CD4-positive, alpha-beta memory T cell (primary cell): ENCODE measurements at regions of chr11 and their contacts with region 1.

Region 1: DNA sequence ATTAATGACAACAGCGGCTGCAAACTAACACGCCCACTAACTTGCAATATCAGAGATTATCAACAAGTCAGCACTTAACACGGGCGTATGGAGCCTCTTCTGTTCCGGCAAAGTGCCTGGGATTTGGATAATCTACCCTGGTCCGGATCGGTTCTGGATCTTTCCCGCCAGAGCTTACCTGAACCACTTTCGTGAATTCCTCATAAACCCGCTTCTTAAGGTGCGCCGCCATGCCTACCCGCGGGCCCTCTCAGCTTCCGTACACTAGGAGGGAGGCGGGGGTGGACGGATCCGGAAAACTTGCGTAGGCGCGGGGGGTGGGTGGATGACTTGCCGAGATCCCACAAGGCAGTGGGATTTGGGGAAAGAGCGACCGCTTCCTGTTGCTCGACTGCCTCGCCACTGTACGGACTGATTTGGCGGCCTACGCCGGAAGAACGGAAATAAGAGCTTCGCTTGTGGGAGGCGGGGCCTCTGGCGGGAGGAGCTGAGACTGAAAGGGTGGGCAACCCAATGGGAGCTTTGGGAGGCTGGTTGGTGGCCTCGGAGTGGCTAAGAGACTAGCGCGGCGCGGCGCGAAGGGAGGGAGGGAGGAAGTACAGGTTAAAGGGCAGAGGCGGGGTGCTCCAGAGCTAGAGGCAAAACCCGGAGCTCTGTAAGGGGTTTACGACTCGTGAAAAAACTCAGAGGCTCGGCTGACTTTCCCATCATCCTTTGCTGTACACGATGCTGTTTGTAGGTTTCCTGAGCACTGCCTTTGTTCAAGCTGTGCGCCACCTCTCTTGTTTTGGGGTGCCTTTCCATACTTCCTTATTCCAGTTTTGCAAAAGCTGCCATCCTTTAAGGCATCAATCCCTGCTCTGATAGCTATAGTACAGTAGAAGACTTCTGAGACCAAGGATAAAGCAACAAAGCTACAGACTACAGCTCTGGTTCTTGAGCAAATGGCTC is at the start of gene INTS4:
- DNase-seq: peak; percentile 97 to 99 (median 99)
- H3K4me3 ChIP-seq: peak within 1 kb of the TSS; percentile 69 to 99
- H3K4me3 Mint-ChIP-seq: peak within 1 kb of the TSS; percentile 92 to 98 (median 96)
- H3K27ac ChIP-seq: peak within 1 kb of the TSS; percentile 76
- H3K27ac Mint-ChIP-seq: peak within 1 kb of the TSS; percentile 96 to 99 (median 98)
- H3K4me1 ChIP-seq: peaks cover 25% of the 10 kb centered on the region
- H3K4me1 Mint-ChIP-seq: peaks cover 15 to 41% (median 26%) of the 10 kb centered on the region in 4 donors
- H3K27me3 ChIP-seq: no peaks in the 10 kb centered on the region
- H3K27me3 Mint-ChIP-seq: no peaks in the 10 kb centered on the region
- total RNA-seq, gene INTS4: 84.0 to 85.0 TPM

Region 2: DNA sequence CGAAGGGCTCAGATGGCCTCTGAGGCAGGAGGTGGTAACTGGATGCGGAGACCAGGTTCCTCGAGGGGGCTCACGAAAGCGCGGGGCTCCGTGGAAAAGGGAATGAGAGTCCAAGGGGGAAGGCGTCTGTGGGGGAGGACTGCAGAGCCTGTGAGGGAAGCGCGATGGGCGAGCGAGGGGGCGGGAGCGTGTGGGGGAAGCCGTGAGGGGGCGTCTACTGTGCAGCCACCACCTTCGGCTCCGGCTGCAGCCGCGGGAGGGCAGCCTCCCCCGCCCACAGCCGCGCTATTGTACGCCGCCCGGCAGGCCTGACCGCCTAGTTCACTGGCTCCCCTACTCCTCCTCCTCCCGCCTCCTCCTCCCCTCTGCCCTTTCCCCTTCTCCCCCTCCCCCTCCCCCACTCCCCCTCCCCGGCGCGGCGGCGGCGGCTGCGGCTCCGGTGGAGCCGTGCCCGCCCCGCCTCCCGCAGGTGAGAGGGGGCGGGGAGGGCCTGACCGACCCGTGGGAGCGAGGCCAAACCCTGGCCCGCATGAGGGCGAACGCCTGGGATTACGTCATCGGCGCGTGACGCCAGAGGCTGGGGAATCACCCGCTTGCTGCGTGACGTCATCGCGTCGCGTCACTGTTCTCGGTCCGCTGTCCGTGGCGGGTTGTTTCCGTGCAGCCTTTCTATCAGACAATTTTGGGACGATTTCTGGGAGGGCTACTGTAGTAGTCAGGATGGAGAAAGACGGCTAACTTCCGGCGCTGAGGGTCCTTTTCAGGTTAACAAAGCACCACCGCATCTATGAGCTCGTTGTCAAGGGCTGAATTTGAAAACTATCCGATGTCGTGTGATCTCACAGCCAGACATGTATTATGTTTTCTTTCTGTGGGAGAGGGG is 520.6 kb before region 1 on chr11 and contains the start of gene PAK1:
- CTCF ChIA-PET with region 1: no interaction called
- POLR2A ChIA-PET with region 1: no interaction called
- intact Hi-C with region 1: loop called (anchors 10 kb)
- DNase-seq: peak; percentile 87 to 96 (median 89)
- H3K4me3 ChIP-seq: peak within 1 kb of the TSS; percentile 42 to 49
- H3K4me3 Mint-ChIP-seq: peak within 1 kb of the TSS; percentile 87 to 97 (median 92)
- H3K27ac ChIP-seq: peak within 1 kb of the TSS; percentile 49
- H3K27ac Mint-ChIP-seq: peak within 1 kb of the TSS; percentile 96 to 100 (median 99)
- H3K4me1 ChIP-seq: peaks cover 11% of the 10 kb centered on the region
- H3K4me1 Mint-ChIP-seq: peaks cover 7 to 14% (median 12%) of the 10 kb centered on the region in 4 donors
- H3K27me3 ChIP-seq: no peaks in the 10 kb centered on the region
- H3K27me3 Mint-ChIP-seq: peaks cover 3 to 11% of the 10 kb centered on the region in 2 donors
- total RNA-seq, gene PAK1: 9.8 to 10.4 TPM

Region 3: GRCh38 chr11:77820563-77821348 is 173.9 kb before region 1 on chr11 and contains the starts of genes AAMDC and RSF1:
- CTCF ChIA-PET with region 1: interaction called, 6 read pairs
- POLR2A ChIA-PET with region 1: interaction called, 62 read pairs
- intact Hi-C with region 1: loop called (anchors 1 kb)
- DNase-seq: peak; percentile 95 to 99 (median 98)
- H3K4me3 ChIP-seq: peak within 1 kb of the TSS; percentile 96 to 100
- H3K4me3 Mint-ChIP-seq: peak within 1 kb of the TSS; percentile 98 to 100 (median 99)
- H3K27ac ChIP-seq: peak within 1 kb of the TSS; percentile 88
- H3K27ac Mint-ChIP-seq: peak within 1 kb of the TSS; percentile 92 to 98 (median 96)
- H3K4me1 ChIP-seq: peaks cover 45% of the 10 kb centered on the region
- H3K4me1 Mint-ChIP-seq: peaks cover 30 to 52% (median 39%) of the 10 kb centered on the region in 4 donors
- H3K27me3 ChIP-seq: no peaks in the 10 kb centered on the region
- H3K27me3 Mint-ChIP-seq: no peaks in the 10 kb centered on the region
- total RNA-seq, gene AAMDC: 7.6 to 9.4 TPM
- total RNA-seq, gene RSF1: 105 to 106 TPM

Region 4: GRCh38 chr11:78079232-78080083 is 84.8 kb after region 1 on chr11 and contains the start of gene NDUFC2:
- CTCF ChIA-PET with region 1: interaction called, 3 read pairs
- POLR2A ChIA-PET with region 1: interaction called, 18 read pairs
- intact Hi-C with region 1: loop called (anchors 1 kb)
- DNase-seq: peak; percentile 60 to 66 (median 64)
- H3K4me3 ChIP-seq: peak within 1 kb of the TSS; percentile 77 to 98
- H3K4me3 Mint-ChIP-seq: peak within 1 kb of the TSS; percentile 93 to 98 (median 96)
- H3K27ac ChIP-seq: peak within 1 kb of the TSS; percentile 75
- H3K27ac Mint-ChIP-seq: peak within 1 kb of the TSS; percentile 87 to 98 (median 96)
- H3K4me1 ChIP-seq: peaks cover 55% of the 10 kb centered on the region
- H3K4me1 Mint-ChIP-seq: peaks cover 34 to 72% (median 49%) of the 10 kb centered on the region in 4 donors
- H3K27me3 ChIP-seq: no peaks in the 10 kb centered on the region
- H3K27me3 Mint-ChIP-seq: no peaks in the 10 kb centered on the region
- total RNA-seq, gene NDUFC2: 80.5 to 86.5 TPM

Region 5: DNA sequence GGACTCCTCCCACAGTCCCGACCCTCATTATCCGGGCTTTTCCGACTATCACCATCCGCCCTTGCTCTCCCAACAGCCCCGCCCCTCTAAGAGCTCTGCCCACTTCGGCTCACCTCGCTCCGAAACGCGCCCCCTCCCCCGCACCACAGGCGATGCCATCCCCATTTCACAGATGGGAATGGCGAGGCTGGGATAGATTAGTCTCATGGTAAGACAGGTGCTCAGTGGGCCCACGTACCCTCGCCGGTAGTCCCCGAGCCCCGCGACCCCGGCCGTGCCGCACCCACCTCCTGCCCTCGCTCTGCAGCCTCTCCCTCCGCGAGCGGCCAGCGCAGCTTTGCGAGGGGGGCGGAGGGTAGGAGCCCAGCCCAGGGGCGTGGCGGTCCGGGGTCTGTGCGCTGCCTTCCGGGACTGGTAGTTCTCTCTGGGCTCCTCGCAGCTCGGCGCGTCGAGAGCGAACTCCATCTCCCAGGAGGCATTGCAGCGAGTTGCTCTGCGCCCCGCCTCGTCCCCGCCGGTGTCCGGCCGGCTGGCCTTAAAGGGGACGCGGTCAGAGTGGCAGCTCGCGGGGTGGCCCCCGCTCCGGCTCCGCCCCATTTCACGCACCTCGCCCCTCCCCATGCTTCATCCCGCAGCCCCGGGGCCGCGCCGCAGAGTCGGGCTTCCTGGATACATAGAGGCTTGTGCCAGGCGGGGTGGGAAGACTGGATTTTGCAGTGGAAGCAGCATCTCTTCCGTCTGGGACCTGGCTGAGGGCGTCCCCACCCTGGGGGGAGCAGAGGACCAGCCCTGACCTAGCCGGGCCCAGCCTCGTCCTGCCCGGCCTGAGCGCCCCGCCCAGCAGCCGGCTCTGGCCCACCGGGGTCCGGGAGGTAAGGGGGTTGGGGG is 193.8 kb after region 1 on chr11 and contains the starts of genes KCTD21 and USP35:
- CTCF ChIA-PET with region 1: no interaction called
- POLR2A ChIA-PET with region 1: interaction called, 14 read pairs
- intact Hi-C with region 1: loop called (anchors 1 kb)
- DNase-seq: peak; percentile 85 to 92 (median 87)
- H3K4me3 ChIP-seq: peak within 1 kb of the TSS; percentile 88 to 90
- H3K4me3 Mint-ChIP-seq: peak within 1 kb of the TSS; percentile 98 to 99 (median 99)
- H3K27ac ChIP-seq: peak within 1 kb of the TSS; percentile 85
- H3K27ac Mint-ChIP-seq: peak within 1 kb of the TSS; percentile 95 to 99 (median 98)
- H3K4me1 ChIP-seq: peaks cover 39% of the 10 kb centered on the region
- H3K4me1 Mint-ChIP-seq: peaks cover 33 to 63% (median 47%) of the 10 kb centered on the region in 4 donors
- H3K27me3 ChIP-seq: no peaks in the 10 kb centered on the region
- H3K27me3 Mint-ChIP-seq: no peaks in the 10 kb centered on the region
- total RNA-seq, gene KCTD21: 8.0 to 8.6 TPM
- total RNA-seq, gene USP35: 12.4 to 14.3 TPM

Region 6: DNA sequence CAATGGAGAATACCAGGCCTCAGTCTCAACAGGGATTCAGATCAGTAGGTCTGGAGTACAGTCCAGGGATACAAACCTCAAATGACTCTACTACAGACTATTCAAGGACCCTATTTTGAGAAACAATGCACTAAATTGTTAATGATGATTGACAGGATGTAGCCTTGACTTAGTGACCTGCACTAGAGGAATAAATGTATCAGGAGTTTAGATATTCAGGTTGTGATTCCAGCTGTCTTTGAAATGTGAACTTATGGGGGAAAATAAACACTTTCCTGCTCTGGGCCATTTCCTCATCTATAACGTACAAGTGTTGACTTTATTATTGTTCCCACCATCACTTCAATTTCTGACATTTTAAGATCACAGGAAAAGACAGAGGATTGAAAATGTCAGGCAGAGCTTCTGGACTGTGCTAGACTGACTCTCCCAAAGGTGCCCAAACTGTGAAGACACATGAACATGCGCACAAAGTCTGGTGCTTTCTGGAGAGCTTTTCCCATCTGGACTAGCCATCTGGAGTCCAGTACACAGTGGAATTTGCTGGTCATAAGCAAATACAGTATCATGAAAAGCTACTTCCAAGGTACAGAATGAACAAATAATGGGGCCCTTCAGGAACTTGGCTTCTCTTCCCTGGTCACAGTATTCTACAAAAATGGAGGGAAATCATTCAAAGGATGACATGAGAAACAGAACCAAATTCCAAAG is 304.5 kb after region 1 on chr11:
- CTCF ChIA-PET with region 1: no interaction called
- POLR2A ChIA-PET with region 1: no interaction called
- intact Hi-C with region 1: no loop called
- DNase-seq: no peak
- H3K4me3 ChIP-seq: no peak overlapping the region
- H3K4me3 Mint-ChIP-seq: no peak overlapping the region
- H3K27ac ChIP-seq: no peak overlapping the region
- H3K27ac Mint-ChIP-seq: no peak overlapping the region
- H3K4me1 ChIP-seq: no peaks in the 10 kb centered on the region
- H3K4me1 Mint-ChIP-seq: peaks cover 0 to 3% (median 0%) of the 10 kb centered on the region in 4 donors
- H3K27me3 ChIP-seq: no peaks in the 10 kb centered on the region
- H3K27me3 Mint-ChIP-seq: peaks cover 0 to 2% of the 10 kb centered on the region in 2 donors

Region 7: GRCh38 chr11:78574386-78575381 is 580.0 kb after region 1 on chr11 and contains the start of gene NARS2:
- CTCF ChIA-PET with region 1: no interaction called
- POLR2A ChIA-PET with region 1: interaction called, 17 read pairs
- intact Hi-C with region 1: loop called (anchors 2 kb)
- DNase-seq: peak; percentile 94 to 98 (median 96)
- H3K4me3 ChIP-seq: peak within 1 kb of the TSS; percentile 46 to 47
- H3K4me3 Mint-ChIP-seq: peak within 1 kb of the TSS; percentile 92 to 99 (median 97)
- H3K27ac ChIP-seq: peak within 1 kb of the TSS; percentile 86
- H3K27ac Mint-ChIP-seq: peak within 1 kb of the TSS; percentile 91 to 100 (median 98)
- H3K4me1 ChIP-seq: peaks cover 28% of the 10 kb centered on the region
- H3K4me1 Mint-ChIP-seq: peaks cover 20 to 41% (median 29%) of the 10 kb centered on the region in 4 donors
- H3K27me3 ChIP-seq: no peaks in the 10 kb centered on the region
- H3K27me3 Mint-ChIP-seq: no peaks in the 10 kb centered on the region
- total RNA-seq, gene NARS2: 16.9 to 18.4 TPM